ENCODE measurements at regions of chr16 and their contacts with region 1.

Region 1: DNA sequence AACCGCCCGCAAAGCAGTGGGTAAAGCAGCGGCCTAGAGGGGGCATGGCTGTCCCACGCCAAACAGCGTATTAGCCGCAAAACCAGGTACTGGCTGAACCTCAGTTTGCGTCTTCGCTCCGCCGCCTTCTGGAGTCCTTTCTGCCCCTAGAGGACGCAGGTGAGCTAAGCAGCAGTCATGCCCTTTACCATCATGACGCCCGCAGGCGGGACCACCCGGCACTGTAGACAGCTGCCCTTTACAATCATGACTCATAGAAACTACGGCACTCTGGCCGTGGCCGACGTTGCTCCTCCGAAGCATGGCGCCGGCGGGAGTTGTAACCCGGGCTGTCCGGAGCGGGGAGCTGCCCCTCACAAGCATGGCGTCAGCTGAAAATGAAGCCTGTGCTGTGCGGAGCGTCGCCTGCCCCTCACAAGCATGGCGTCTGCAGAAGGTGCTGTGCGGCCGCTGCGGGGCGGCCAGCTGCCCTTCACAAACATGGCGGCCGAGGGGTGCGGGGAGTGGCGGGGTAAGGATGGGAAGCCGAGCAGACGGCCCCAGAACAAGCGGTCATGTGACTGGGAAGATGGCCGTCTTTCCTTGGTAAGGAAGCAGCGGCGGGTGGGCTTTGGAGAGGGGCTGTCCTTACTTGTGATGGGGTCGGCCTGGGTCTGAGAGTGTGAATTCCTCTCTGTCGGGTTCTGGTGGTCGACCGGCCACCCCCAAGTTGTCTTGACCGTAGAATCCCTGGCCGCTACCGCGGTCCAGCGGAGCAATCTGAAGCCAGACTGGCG is at the start of gene VPS35L:
- DNase-seq: peak; percentile 99
- ATAC-seq: peak; percentile 94
- H3K4me3 ChIP-seq: peak within 1 kb of the TSS; percentile 68 to 92 (median 87)
- H3K4me3 Mint-ChIP-seq: peak within 1 kb of the TSS; percentile 93
- H3K27ac ChIP-seq: peak within 1 kb of the TSS; percentile 81 to 88
- H3K27ac Mint-ChIP-seq: peak within 1 kb of the TSS; percentile 93
- H3K4me1 ChIP-seq: peaks cover 7 to 19% of the 10 kb centered on the region in 2 donors
- H3K4me1 Mint-ChIP-seq: peaks cover 24% of the 10 kb centered on the region
- H3K27me3 ChIP-seq: no peaks in the 10 kb centered on the region
- H3K27me3 Mint-ChIP-seq: no peaks in the 10 kb centered on the region
- CTCF ChIP-seq: peak; percentile 92
- total RNA-seq, gene VPS35L: 62.1 and 63.6 TPM in 2 replicates

Region 2: DNA sequence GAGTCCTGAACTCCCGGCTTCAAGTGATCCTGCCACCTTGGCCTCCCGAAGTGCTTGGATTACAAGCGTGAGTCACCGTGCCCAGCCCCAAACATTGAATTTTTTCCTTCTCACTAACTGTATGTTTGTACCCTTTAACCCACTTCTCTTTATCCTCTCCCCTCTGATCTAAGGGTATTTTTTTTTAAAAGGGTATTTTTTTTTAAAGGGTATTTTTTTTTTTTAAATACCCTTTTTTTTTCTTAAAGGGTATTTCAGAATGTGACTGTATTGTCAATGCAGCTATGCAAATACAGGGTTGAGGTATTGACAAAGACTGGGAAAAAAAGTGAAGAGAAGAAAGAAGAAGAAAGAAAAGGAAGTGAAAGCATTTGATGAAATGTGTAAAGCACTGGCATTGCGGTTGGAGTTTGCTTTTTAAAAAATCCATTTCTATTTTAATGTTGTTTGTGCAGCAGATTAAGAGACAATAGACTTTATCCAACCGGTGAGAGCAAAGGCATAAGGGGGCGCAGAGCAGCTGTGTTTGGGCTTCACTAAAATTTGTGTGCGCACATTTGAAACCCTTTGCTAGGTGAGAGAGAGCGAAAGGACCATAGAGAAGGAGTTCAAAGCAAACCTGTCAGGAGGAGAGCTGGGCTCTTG is 344.9 kb before region 1 on chr16:
- CTCF ChIA-PET with region 1: no interaction called
- POLR2A ChIA-PET with region 1: interaction called, 13 read pairs
- intact Hi-C with region 1: no loop called
- DNase-seq: peak; percentile 85
- ATAC-seq: peak; percentile 73
- H3K4me3 ChIP-seq: peak overlapping the region in 4 of 5 experiments; percentile 32 to 63 (median 48)
- H3K4me3 Mint-ChIP-seq: peak overlapping the region; percentile 85
- H3K27ac ChIP-seq: peak overlapping the region; percentile 96
- H3K27ac Mint-ChIP-seq: peak overlapping the region; percentile 95
- H3K4me1 ChIP-seq: peaks cover 41 to 71% of the 10 kb centered on the region in 2 donors
- H3K4me1 Mint-ChIP-seq: peaks cover 60% of the 10 kb centered on the region
- H3K27me3 ChIP-seq: no peaks in the 10 kb centered on the region
- H3K27me3 Mint-ChIP-seq: no peaks in the 10 kb centered on the region
- CTCF ChIP-seq: no peak

Region 3: DNA sequence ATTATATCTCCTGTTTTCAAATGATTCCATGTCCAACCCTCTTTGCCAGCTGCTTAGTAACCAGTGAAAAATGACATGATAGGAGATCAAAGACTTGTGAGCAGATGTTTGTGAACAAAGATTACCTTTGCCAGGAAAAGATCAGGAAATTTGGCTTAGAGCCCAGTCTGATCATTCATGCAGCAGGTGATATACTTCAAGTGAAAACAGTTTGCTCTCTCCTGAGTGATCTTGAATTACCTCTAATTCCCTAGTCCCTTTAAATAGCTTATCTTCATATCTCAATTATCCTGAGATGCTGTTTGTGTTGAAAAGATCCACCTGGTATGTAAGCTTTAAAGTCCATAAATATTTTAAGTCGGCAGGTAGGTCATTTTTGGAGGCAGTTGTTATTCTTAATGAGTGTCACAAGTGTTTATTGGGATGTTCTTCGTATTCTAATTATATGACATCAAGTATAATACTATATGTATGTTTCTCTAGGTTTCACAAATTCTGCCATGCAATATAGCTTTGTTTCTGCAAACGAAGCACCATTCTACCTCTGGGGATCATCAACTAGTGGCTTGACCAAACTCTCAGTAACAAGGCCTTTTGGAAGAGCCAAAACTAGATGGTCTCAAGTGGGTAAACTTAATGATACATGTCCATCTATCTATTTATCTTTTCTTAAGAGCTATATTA is 13.1 kb before region 1 on chr16:
- CTCF ChIA-PET with region 1: interaction called, 15 read pairs
- POLR2A ChIA-PET with region 1: no interaction called
- intact Hi-C with region 1: no loop called
- DNase-seq: no peak
- ATAC-seq: no peak
- H3K4me3 ChIP-seq: no peak overlapping the region
- H3K4me3 Mint-ChIP-seq: no peak overlapping the region
- H3K27ac ChIP-seq: no peak overlapping the region
- H3K27ac Mint-ChIP-seq: no peak overlapping the region
- H3K4me1 ChIP-seq: no peaks in the 10 kb centered on the region
- H3K4me1 Mint-ChIP-seq: no peaks in the 10 kb centered on the region
- H3K27me3 ChIP-seq: no peaks in the 10 kb centered on the region
- H3K27me3 Mint-ChIP-seq: no peaks in the 10 kb centered on the region
- CTCF ChIP-seq: no peak

Region 4: DNA sequence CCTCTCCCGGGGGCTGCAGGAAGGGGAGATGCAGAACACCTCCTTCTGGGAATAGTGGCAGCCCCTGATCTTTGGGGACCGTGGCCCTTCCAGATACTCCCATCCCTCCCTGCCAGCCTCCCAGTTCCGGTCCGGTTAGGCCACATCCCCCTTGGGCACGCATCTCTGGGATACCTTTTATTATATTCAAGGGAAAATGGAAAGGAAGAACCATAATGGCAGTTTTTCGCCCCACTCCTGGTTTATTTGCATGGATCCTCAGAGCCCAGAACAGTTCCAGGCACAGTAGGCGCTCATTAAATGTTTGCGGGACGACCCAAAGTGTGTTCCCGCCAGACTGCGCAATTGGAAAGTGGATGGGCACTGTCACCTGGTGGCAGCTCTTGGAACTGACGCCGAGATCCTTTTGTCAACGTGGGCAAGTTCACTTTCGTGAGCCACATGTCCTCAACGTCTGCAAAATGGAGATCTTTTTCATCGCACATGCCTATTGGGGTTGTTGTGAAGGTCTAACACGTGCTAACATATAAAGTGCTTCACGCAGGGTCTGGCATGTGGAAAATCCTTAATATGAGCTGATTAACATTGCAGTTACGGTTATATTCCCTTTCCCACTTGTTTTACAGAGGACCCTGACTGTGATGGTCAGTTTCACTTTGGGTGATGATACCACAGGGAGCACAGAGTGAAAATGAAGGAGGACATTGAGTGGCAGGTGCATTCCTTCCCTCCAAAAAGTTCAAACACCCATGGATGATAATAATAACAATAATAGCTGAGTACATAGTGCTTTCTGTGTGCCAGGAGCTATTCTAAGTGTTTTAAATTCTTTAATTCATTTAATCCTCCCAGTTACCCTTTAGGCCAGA is 331.0 kb after region 1 on chr16:
- CTCF ChIA-PET with region 1: interaction called, 55 read pairs
- POLR2A ChIA-PET with region 1: no interaction called
- intact Hi-C with region 1: loop called (anchors 1 kb)
- DNase-seq: peak; percentile 80
- ATAC-seq: peak; percentile 62
- H3K4me3 ChIP-seq: peak overlapping the region in 1 of 5 experiments; percentile 60
- H3K4me3 Mint-ChIP-seq: peak overlapping the region; percentile 85
- H3K27ac ChIP-seq: no peak overlapping the region
- H3K27ac Mint-ChIP-seq: no peak overlapping the region
- H3K4me1 ChIP-seq: peaks cover 33 to 34% of the 10 kb centered on the region in 2 donors
- H3K4me1 Mint-ChIP-seq: peaks cover 32% of the 10 kb centered on the region
- H3K27me3 ChIP-seq: peaks cover 0 to 46% (median 22%) of the 10 kb centered on the region in 4 experiments
- H3K27me3 Mint-ChIP-seq: peaks cover 35% of the 10 kb centered on the region
- CTCF ChIP-seq: peak; percentile 92

Region 5: DNA sequence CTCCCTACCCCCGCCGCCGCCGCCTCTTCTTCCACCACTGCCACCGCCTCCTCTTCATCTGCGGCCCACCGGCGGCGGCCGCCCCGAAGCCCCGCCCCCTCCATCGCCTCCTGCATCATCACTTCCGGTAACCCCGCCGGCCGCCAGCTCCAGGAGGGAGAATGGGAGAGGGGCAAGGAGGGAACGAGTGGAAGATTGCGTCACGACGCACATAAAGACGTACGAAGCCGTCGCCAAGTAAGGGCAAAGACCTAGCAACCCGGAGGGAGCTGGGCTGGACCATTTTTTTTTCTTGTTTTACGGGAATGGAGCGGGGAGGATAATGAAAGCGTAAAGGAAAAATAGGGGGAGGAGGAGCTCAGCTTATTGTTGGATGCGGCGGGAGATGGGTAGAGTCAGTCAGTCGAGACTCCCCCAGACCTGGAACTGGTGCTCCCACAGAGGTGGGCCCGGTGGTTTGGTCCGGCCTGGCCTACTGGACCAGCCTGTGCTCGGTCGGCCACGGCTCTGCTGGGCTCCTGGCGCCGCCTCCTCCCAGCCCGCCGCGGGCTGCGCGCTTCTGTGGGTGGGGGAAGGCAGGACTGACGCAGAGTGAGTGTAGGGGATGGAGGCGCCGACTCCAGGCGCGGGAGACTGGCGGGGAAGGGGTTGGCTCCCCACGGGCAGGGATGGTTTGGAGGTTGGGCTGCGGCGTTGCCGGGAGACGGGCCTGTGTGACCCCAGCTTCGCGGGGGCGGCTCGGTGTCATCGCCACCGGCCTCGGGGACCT is 1345.1 kb after region 1 on chr16 and contains the starts of genes DCUN1D3 and LYRM1:
- CTCF ChIA-PET with region 1: no interaction called
- POLR2A ChIA-PET with region 1: no interaction called
- intact Hi-C with region 1: loop called (anchors 10 kb)
- DNase-seq: peak; percentile 92
- ATAC-seq: peak; percentile 76
- H3K4me3 ChIP-seq: peak within 1 kb of the TSS; percentile 89 to 96 (median 95)
- H3K4me3 Mint-ChIP-seq: peak within 1 kb of the TSS; percentile 94
- H3K27ac ChIP-seq: peak within 1 kb of the TSS; percentile 77 to 96
- H3K27ac Mint-ChIP-seq: peak within 1 kb of the TSS; percentile 95
- H3K4me1 ChIP-seq: peaks cover 49 to 52% of the 10 kb centered on the region in 2 donors
- H3K4me1 Mint-ChIP-seq: peaks cover 68% of the 10 kb centered on the region
- H3K27me3 ChIP-seq: no peaks in the 10 kb centered on the region
- H3K27me3 Mint-ChIP-seq: no peaks in the 10 kb centered on the region
- CTCF ChIP-seq: no peak
- total RNA-seq, gene DCUN1D3: 5.0 and 5.7 TPM in 2 replicates
- total RNA-seq, gene LYRM1: 19.0 and 21.8 TPM in 2 replicates